ENCODE measurements at regions of chr11 and their contacts with region 1.

Region 1: DNA sequence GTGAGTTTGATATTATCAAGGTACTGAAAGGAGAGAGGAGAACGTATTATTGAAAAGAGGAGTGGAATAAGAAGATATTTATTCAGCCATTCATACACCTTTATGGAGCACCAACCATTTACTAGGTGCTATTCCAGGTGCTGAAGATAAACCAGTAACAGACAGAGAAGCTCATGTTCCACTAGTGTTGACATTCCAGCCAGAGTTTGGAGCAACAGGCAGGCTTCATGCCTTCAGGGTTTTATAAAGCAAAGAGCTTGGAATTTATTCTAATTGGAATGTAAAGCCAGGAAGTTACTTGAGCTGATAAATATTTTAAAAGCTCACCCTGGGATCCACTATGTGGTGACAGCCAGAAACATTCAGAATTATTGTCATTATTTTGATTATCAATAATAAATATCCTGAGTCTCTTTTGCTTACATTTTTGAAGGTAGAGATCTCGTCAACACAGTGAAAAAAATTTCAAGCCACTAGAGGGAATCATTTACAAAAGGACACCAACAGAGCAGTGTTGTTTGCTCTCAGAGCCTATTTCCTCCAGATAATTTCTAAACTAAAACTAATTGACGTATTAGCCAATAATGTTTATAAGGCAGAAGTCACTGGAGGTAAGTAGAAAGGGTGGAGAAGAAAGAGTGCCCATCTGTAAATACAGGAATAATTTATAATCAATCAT is 172.0 kb downstream of the KCNA4 start:
- DNase-seq: no peak
- ATAC-seq: peak; percentile 58

Region 2: DNA sequence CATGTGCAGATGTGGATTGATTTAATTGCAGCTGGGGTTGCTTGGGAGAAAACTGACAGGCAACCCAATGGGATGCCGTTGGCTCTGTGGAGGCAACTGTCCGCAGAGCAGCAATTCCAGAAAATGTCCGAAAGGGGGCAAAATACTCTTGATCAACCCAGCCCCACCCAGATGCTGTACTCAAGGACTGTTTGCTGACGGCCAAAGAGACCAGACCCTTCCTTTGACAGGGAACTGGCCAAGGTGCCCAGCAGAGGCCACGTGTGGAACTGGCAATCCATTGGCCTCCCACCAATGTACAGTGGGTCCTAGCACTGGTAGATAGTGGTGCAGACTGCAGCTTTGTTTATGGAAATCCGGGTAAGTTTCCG is 201.7 kb after region 1 on chr11:
- intact Hi-C with region 1: loop called (anchors 10 kb)
- DNase-seq: no peak
- ATAC-seq: no peak

Measured in Right ventricle myocardium superior (tissue), 1 donor.